ENCODE measurements at regions of chr10 and their contacts with region 1.

Region 1: DNA sequence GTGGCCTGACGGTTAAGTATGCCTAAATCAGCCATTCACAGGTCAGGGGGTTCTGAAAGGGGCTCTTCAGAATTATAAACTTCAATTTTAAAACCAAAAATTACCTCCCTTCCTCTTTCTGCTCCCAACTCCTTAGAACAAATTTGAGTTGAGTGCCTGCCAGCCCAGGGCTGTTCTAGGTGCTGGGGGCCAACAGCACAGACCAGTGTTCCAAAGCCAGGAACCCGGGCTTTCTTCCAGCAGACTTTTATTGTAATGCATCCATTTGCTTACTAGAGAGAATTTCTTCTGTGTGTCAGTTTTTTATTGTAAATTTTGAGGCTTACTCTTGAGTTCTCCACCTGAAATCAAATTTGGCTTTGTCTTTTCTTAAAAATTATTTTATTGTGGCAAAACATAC is 238.5 kb downstream of the CACNB2 start:
- DNase-seq: peak; percentile 25 to 28
- ATAC-seq: peak in 5 of 8 donors; percentile 52 to 83 (median 69)
- H3K4me3 ChIP-seq: no peak overlapping the region
- H3K27ac ChIP-seq: peak overlapping the region in 4 of 10 donors; percentile 3 to 33 (median 19)
- H3K4me1 ChIP-seq: peaks cover 0 to 28% (median 8%) of the 10 kb centered on the region in 9 donors
- H3K27me3 ChIP-seq: no peaks in the 10 kb centered on the region
- CTCF ChIP-seq: no peak

Region 2: DNA sequence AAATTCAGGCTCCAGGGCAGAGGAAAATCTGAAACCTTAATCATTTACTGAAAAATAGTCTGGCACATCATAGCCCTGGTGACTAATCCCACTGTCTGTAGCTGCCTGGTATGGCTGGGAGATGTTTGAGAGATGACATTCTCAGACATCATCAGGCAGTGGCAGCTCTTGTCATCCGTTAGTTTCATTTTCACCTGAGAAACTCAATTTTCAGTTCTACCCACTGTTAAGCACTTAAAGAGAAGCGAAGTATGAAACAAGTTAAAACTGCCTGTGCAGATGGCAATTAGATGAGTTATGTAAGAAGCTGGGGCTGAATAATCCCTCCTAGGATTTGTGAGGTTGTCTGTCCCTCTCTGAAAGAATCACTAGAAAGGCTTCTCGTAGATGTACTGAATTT is 122.4 kb after region 1 on chr10:
- intact Hi-C with region 1: no loop called
- DNase-seq: no peak
- ATAC-seq: no peak
- H3K4me3 ChIP-seq: no peak overlapping the region
- H3K27ac ChIP-seq: peak overlapping the region in 1 of 10 donors; percentile 13
- H3K4me1 ChIP-seq: peaks cover 0 to 22% (median 11%) of the 10 kb centered on the region in 9 donors
- H3K27me3 ChIP-seq: no peaks in the 10 kb centered on the region
- CTCF ChIP-seq: no peak

Region 3: DNA sequence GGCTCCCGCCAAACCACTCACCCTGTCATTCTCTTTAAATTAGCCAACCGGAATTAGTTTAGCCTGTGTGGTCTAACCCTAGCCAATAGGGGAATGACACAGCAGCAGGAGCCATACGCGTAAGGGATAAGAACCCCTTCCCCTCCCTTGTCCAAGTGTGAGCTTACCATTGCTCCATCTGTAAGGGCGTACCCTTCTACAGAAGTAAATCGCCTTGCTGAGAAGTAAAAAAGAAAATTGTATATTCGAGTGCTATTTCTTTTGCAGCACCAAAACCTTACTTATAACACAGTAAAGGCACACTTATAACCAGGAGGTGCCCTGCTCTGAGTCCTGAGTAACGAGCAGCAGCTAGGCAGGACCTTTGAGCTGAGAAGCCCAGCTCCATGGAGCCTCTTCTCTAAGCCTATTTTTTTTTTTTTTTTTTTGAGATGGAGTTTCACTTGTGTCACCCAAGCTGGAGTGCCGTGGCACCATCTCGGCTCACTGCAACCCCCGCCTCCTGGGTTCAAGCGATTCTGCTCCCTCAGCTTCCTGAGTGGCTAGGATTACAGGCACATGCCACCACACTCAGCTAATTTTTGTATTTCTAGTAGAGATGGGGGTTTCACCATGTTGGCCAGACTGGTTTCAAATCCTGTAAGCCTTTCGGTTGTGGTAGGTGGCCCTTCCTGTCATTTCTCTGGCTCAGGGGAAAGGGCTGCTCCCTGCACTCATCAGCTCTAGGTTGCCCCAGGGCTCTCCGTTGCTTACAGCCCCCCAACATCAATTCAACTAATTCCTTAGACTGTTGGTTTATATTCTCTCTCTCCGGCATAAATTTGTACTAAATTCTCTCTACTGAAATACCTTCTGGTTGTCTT is 199.3 kb after region 1 on chr10:
- intact Hi-C with region 1: no loop called
- DNase-seq: no peak
- ATAC-seq: no peak
- H3K4me3 ChIP-seq: no peak overlapping the region
- H3K27ac ChIP-seq: no peak overlapping the region
- H3K4me1 ChIP-seq: peaks cover 0 to 8% (median 0%) of the 10 kb centered on the region in 9 donors
- H3K27me3 ChIP-seq: no peaks in the 10 kb centered on the region
- CTCF ChIP-seq: no peak

Region 4: GRCh38 chr10:20029523-20029922 is 1650.8 kb after region 1 on chr10:
- intact Hi-C with region 1: loop called in 1 of 10 experiments (anchors 5 kb)
- DNase-seq: no peak
- ATAC-seq: no peak
- H3K4me3 ChIP-seq: no peak overlapping the region
- H3K27ac ChIP-seq: no peak overlapping the region
- H3K4me1 ChIP-seq: peaks cover 0 to 26% (median 12%) of the 10 kb centered on the region in 9 donors
- H3K27me3 ChIP-seq: no peaks in the 10 kb centered on the region
- CTCF ChIP-seq: no peak

Measured in heart right ventricle (tissue), 16 donors.